ENCODE measurements at regions of chr6 and their contacts with region 1.

Region 1: GRCh38 chr6:159789377-159790148 is at the start of gene TCP1:
- DNase-seq: peak; percentile 100
- H3K4me3 ChIP-seq: peak within 1 kb of the TSS; percentile 63 to 95 (median 64)
- H3K27ac ChIP-seq: peak within 1 kb of the TSS; percentile 62
- H3K4me1 ChIP-seq: peaks cover 27% of the 10 kb centered on the region
- H3K27me3 ChIP-seq: no peaks in the 10 kb centered on the region
- CTCF ChIP-seq: no peak
- POLR2A ChIP-seq: peak; percentile 88
- total RNA-seq, gene TCP1: 288 and 302 TPM in 2 replicates

Region 2: DNA sequence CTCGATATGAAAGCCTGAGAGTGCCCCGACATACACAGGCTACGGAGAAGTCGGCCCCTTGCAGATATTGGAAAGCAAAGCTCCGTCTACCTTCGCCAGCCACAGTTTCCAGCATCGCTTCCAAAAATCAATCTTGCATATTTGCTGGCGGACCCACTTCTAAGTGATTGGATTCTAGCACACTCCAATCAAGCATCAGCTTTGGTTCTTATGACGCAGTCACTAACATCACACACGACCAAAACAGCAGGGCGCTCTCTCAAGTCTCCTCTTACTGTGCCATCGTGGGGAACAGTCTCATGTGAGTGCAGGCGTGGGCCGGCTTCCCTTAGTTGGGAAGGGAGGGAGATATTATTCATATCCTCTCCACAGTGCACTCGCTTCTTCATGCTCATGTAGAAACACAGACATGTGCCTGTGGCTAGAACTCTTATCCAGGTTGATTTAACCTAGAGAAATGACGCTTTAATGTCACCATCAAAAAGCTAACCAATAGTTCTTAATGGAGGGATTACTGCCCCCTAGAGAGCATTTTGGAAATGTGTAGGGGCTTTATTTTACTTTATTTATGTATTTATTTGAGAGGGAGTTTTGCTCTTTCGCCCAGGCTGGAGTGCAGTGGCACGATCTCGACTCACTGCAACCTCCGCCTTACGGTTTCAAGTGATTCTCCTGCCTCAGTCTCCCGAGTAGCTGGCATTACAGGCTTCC is 326.3 kb before region 1 on chr6:
- CTCF ChIA-PET with region 1: no interaction called
- POLR2A ChIA-PET with region 1: no interaction called
- dilution Hi-C with region 1: no loop called
- intact Hi-C with region 1: no loop called
- DNase-seq: no peak
- H3K4me3 ChIP-seq: no peak overlapping the region
- H3K27ac ChIP-seq: no peak overlapping the region
- H3K4me1 ChIP-seq: no peaks in the 10 kb centered on the region
- H3K27me3 ChIP-seq: no peaks in the 10 kb centered on the region
- CTCF ChIP-seq: no peak
- POLR2A ChIP-seq: no peak

Region 3: DNA sequence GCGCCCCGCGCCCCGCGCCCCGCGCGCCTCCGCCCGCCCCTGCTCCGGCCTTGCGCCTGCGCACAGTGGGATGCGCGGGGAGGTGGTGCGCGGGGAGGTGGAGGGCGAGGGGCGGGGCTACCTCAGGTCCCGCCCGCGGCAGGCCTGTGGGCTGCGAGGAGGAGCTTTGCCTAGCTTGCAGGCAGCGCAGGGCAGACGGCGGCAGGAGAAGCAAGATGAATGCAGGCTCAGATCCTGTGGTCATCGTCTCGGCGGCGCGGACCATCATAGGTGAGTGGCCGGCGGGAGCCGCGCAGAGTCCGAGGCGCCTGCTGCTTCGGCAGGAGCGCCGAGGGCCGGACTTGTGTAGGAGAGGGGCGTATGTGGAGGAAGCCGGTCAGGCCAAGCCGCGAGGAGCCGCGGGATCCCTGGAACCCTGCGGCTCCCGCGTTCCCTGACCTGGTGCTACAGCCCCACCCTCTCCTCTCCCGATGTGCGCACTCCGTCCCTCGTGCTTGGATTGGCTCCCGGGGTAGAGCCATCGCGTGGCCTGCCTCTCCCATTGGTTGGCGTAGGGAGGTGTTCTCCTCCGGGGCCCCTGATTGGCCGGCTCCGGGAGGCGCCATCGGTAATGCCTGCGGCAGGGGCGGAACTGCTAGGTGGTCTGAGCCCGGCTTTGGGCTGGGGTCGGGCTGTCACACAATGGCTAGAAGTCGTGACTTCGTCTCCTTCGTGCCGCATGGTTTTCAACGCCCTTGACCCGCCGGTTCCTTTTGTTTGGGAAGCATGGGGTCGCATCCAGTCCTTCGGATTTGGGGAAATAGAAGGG is 27.5 kb before region 1 on chr6 and contains the start of gene ACAT2:
- CTCF ChIA-PET with region 1: interaction called, 4 read pairs
- POLR2A ChIA-PET with region 1: interaction called, 7 read pairs
- dilution Hi-C with region 1: no loop called
- intact Hi-C with region 1: loop called (anchors 1 kb)
- DNase-seq: peak; percentile 94
- H3K4me3 ChIP-seq: peak within 1 kb of the TSS; percentile 73 to 97 (median 92)
- H3K27ac ChIP-seq: peak within 1 kb of the TSS; percentile 85
- H3K4me1 ChIP-seq: peaks cover 20% of the 10 kb centered on the region
- H3K27me3 ChIP-seq: no peaks in the 10 kb centered on the region
- CTCF ChIP-seq: no peak
- POLR2A ChIP-seq: peak; percentile 72
- total RNA-seq, gene ACAT2: 114 and 131 TPM in 2 replicates

Region 4: GRCh38 chr6:159801935-159802334 is 12.4 kb after region 1 on chr6:
- CTCF ChIA-PET with region 1: no interaction called
- POLR2A ChIA-PET with region 1: no interaction called
- dilution Hi-C with region 1: no loop called
- intact Hi-C with region 1: no loop called
- DNase-seq: no peak
- H3K4me3 ChIP-seq: no peak overlapping the region
- H3K27ac ChIP-seq: no peak overlapping the region
- H3K4me1 ChIP-seq: no peaks in the 10 kb centered on the region
- H3K27me3 ChIP-seq: no peaks in the 10 kb centered on the region
- CTCF ChIP-seq: no peak
- POLR2A ChIP-seq: no peak

Region 5: DNA sequence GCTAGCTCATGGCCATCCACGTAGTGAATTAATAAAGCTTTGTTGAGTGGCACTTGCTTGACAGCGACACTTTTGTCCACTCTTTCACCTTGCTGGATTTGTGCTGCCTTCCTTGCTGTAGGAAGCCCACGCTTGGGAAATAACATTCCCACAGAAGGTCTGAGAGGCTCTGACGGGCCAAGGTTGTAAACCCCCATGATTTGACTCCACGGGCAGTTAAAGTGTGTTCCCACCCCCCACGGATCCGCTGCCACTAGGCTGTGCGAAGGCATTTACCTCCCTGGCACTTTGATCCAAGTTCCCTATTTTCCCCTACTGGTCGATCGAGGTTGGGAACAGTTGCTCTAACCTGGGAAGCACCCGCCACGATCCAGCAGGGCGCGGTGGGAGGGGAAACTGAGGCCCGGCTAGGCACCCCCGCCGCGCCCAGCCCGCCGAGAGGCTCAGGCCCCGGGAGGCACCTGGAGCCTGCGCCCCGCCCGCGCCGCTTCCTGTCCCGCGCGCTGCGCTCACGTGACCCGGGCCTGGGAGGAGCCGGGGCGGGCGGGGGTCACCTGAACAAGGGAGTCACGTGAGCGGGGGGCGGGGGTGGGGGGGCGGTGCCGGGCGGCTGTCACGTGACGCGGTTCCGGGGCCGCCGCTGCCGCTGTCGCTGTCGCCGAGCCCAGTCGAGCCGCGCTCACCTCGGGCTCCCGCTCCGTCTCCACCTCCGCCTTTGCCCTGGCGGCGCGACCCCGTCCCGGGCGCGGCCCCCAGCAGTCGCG is 179.1 kb after region 1 on chr6 and contains the start of gene IGF2R:
- CTCF ChIA-PET with region 1: no interaction called
- POLR2A ChIA-PET with region 1: no interaction called
- dilution Hi-C with region 1: no loop called
- intact Hi-C with region 1: loop called (anchors 1 kb)
- DNase-seq: peak; percentile 69
- H3K4me3 ChIP-seq: peak within 1 kb of the TSS; percentile 71 to 93 (median 79)
- H3K27ac ChIP-seq: peak within 1 kb of the TSS; percentile 58
- H3K4me1 ChIP-seq: peaks cover 8% of the 10 kb centered on the region
- H3K27me3 ChIP-seq: peaks cover 6 to 14% of the 10 kb centered on the region in 2 experiments
- CTCF ChIP-seq: peak in 1 of 2 donors; percentile 23
- POLR2A ChIP-seq: peak; percentile 67
- total RNA-seq, gene IGF2R: 59.7 and 60.2 TPM in 2 replicates

Region 6: GRCh38 chr6:160102956-160103824 is 313.6 kb after region 1 on chr6:
- CTCF ChIA-PET with region 1: no interaction called
- POLR2A ChIA-PET with region 1: no interaction called
- dilution Hi-C with region 1: no loop called
- intact Hi-C with region 1: loop called (anchors 10 kb)
- DNase-seq: peak; percentile 40
- H3K4me3 ChIP-seq: no peak overlapping the region
- H3K27ac ChIP-seq: no peak overlapping the region
- H3K4me1 ChIP-seq: no peaks in the 10 kb centered on the region
- H3K27me3 ChIP-seq: no peaks in the 10 kb centered on the region
- CTCF ChIP-seq: peak; percentile 41 to 59
- POLR2A ChIP-seq: no peak

Measured in endothelial cell of umbilical vein (primary cell).